ENCODE measurements at regions of chr5 and their contacts with region 1.

Region 1: DNA sequence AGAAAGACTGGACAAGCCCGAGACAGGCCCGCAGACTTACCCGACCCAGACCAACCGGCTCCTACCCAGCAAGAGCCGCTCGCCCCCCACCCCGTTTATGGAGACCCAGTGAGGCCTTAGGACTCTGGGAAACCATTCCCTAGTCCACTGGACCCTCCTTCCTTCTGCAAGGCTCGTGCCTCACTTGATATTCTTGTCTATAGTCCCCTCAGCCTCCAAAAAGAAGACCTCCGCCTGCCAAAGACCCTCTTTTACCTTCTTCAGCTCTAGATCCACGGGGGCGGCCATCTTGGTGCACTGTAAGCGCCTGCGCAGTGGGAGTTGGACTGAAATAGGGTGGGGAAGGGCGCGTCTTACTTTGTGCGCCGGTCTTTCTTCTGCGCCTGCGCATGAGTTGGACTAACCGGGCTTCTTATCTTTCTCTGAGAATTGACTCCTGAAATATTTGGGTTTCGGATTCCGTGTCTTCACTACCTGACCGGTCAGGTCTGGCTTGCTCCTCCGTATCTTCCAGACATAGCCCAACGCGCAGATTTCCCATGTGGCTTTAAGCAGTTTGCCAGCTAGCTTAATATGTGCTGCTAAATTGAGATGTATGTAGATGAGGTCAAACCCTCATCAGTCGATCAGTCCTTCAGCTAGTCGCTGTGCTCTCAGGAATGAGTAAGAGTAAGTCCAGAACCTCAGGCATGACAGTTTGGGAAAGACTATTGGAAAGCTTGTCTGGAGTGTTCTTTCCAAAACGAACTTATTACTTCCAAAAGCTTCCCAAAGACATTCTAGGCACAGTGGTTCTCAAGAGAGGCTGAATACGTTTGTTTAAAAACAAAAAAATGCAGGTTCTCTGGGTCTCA is at the start of gene PFDN1:
- DNase-seq: peak; percentile 98
- H3K4me3 ChIP-seq: peak within 1 kb of the TSS; percentile 68
- H3K27ac ChIP-seq: peak within 1 kb of the TSS; percentile 77
- H3K4me1 ChIP-seq: peaks cover 27% of the 10 kb centered on the region
- H3K27me3 ChIP-seq: no peaks in the 10 kb centered on the region
- CTCF ChIP-seq: no peak
- total RNA-seq, gene PFDN1: 81.2 and 94.1 TPM in 2 replicates

Region 2: DNA sequence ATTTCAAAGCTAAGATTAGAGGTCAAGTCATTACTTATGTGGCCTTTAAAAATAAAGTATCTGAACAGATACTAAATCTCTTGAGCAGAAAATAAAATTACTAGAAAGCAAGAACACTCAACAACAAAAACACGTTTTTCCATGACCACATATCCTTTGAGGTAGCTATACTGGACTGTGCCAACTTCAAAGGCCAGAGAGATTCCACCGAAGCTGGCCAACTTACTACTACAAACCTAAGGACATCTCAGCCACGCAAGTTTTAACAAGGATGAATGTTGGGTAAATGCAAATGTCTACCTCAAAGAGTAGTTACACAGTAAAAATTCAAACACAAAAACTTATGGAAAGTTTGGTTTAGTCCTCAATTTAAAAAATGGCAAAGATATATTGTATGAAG is 19.0 kb before region 1 on chr5:
- CTCF ChIA-PET with region 1: no interaction called
- POLR2A ChIA-PET with region 1: interaction called, 13 read pairs
- intact Hi-C with region 1: no loop called
- DNase-seq: no peak
- H3K4me3 ChIP-seq: no peak overlapping the region
- H3K27ac ChIP-seq: no peak overlapping the region
- H3K4me1 ChIP-seq: peaks cover 12% of the 10 kb centered on the region
- H3K27me3 ChIP-seq: no peaks in the 10 kb centered on the region
- CTCF ChIP-seq: no peak

Region 3: DNA sequence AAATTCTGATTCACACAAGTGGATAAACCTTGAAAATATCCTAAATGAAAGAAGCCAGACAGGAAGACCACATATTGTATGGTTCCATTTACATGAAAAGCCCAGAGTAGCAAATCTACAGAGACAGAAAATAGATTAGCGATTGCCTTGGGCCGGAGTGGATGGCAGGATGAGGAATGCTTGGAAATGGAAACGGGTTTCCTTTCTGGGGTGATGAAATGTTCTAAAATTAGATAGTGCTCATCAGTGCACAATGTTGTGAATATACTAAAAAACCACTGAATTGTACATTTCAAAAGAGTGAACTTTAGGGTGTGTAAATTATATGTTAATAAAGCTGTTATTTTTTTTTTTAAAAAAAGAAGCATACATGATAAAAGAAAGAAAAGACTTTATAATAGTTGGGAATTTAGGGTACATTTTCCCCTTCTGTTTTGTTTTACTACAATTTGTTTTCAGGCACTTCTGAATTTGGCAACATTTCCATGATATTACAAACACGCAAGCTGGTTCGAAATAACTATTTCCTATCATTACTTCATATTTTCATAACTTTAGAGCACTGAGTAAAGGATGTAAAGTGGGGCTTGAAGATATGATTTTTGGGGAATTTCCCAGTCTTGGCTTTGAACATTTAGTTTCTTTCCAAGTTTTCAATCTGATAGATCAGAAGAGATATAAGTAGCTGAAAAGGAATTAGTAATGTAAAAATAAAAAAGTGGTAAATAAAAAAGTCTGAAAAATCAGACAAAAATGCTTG is 285.5 kb after region 1 on chr5:
- CTCF ChIA-PET with region 1: no interaction called
- POLR2A ChIA-PET with region 1: interaction called, 11 read pairs
- intact Hi-C with region 1: no loop called
- DNase-seq: no peak
- H3K4me3 ChIP-seq: no peak overlapping the region
- H3K27ac ChIP-seq: no peak overlapping the region
- H3K4me1 ChIP-seq: no peaks in the 10 kb centered on the region
- H3K27me3 ChIP-seq: no peaks in the 10 kb centered on the region
- CTCF ChIP-seq: no peak

Region 4: DNA sequence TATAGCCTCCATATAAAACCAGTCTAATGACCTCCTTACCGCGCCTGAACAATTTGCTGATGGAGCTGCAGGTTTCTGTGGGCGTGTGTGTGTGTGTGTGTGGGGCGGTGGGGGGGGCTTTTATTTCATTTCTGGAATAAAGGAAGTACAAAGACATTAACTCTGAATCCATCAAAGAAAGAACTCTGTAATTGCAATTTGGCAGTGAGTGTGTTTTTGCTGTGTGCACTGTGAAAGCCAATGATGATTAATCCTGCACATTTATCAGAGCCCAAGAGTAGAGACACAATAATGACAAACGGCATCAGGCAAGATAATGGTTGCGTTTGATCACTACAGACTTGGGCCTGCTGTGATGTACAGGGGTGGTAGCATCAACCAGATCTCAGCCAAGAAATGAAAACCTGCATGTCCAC is 1776.3 kb after region 1 on chr5:
- CTCF ChIA-PET with region 1: no interaction called
- POLR2A ChIA-PET with region 1: interaction called, 13 read pairs
- intact Hi-C with region 1: no loop called
- DNase-seq: no peak
- H3K4me3 ChIP-seq: no peak overlapping the region
- H3K27ac ChIP-seq: no peak overlapping the region
- H3K4me1 ChIP-seq: no peaks in the 10 kb centered on the region
- H3K27me3 ChIP-seq: no peaks in the 10 kb centered on the region
- CTCF ChIP-seq: no peak

Measured in A673 (cell line).